ENCODE measurements at regions of chr14 and their contacts with region 1.

Region 1: DNA sequence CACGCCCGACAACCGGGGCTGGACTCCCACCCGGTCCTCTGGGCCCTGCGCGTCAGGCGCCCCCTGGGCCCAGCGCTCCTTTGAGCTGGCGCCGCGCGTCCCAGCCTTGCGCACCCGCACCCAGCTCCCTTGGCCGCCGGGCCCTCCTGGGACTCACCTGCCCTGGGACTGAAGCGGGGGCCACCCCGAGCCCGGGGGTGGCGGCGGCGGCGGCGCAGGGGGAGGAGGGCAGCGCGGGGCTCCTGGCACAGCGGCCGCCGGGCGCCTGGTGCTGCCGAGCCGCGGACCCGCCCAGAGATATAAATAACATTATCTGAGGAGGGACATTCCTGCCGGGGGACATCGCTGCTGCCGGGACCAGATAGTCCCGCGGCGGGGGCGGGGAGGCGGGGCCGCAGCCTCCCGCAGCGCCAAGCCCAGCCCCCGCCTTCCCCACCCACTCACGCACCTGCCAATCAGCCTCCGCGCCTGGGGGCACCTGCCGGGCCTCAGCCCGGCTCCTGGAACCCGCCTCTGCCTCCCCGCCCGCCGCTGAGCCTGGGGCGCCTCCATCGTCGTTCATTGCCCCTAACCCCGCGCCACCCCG is at the start of gene SPTB:
- DNase-seq: peak in 41 of 42 donors; percentile 6 to 81 (median 61)

Region 2: DNA sequence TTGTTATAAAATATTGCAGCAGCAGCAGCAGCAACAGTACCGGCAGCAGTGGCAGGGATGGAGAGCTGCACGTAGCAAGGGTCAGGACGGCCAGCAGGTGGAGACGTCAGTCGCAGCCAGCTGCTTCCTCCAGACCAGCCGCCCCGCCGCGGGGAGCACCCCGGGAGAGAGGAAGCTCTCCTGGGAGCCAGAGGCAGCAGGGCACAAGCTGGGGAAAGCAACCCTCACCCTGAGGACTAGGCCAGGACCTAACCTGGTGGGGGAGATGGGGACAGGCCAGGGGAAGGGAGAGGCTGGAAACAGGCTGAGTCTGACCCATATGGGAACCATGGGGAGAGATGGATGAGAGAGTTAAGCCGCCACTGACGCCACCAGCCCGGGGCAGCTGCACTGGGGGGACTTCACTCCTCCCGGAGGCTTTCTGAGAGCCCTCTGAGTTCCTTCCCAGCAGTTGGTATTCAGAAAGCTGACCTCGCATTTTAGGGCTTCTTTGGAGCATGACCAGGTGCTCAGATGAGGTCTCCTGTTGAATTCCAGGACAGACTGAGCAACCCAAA is 56.3 kb before region 1 on chr14:
- intact Hi-C with region 1: loop called (anchors 5 kb)
- DNase-seq: peak; percentile 50 to 91 (median 78)

Region 3: DNA sequence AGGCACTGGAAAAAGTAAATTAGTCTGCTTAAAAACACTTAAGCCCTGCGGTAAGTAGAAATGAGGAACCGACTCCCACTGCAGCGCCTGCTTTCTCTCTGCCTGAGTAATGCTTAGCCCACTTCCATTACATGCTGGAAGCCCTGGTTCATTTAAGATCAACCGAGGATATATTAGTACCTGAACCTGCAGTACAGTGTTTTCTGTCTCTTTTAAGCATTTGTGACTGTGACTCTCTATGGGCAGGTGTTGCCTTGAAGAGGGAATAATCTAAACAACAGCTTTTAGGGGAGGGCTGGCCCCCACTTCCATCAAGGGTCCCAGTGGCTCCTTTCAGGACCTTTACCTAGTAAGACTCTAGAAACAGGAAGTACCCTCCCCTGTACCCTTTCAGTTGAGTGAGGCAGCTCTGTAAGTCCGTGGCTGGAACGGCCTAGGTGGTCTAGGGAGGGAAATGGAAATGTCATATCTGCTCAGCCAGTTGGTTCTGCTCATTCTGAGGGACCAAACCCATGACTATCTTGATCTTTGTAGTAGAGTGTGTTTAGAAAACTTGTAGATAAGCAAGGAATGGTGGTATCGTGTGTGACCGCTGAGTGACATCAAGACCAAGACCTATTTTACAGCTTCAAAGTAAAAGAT is 163.1 kb after region 1 on chr14:
- intact Hi-C with region 1: no loop called
- DNase-seq: peak in 17 of 42 donors; percentile 20 to 69 (median 40)